Psoas muscle (tissue), 8 donors: ENCODE measurements at regions of chr12 and their contacts with region 1.

Region 1: GRCh38 chr12:9843416-9843815 is 16.1 kb downstream of the KLRF1 start:
- DNase-seq: no peak
- ATAC-seq: no peak
- H3K4me3 ChIP-seq: no peak overlapping the region
- H3K27ac ChIP-seq: no peak overlapping the region
- H3K4me1 ChIP-seq: no peaks in the 10 kb centered on the region
- H3K27me3 ChIP-seq: no peaks in the 10 kb centered on the region
- CTCF ChIP-seq: no peak

Region 2: DNA sequence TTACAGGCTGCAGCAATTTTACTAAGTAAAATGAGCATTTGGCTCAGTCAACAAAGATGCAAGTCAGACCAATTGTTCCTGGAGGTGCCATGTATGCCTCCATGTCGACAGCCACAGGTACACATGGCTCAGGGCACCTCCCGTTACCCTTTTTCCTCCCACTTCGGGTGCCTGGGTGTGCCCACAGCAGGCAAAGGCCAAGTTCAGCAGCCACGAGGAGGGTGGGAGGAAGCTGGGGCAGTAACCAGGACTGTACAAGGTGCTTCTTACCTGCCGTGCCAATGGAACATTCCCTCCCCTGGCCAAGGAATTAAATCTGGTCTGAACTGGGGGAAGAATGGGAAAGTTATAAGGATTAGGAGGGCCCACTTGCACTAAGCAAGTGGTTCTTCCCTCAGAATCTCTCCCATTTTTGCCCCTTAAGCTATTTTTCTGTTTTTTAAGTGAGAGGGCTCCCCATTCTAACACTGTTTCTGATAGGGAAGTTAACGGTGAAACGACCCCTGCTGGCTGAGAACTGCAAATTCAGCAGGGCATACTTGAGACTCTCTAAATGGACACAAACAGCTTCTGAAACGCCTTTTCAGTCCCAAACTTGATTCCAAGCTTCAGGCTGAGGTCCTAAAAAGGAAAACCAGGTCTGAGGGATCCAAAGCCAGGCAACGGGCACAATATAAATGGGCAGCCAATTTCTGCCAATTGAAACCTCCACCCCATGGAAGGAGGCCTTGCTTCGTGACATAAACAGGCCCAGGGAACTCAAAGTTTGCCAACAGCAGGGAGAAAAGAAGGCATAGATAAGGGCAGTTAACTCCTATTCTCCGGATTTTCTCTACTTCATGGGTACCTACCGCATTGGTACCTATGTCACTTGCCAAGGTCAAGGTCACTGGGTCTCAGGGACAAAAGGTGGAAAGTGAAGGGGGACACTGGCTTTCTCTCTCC is 135.3 kb before region 1 on chr12:
- intact Hi-C with region 1: no loop called
- DNase-seq: peak; percentile 28 to 48
- ATAC-seq: peak in 1 of 4 donors; percentile 60
- H3K4me3 ChIP-seq: no peak overlapping the region
- H3K27ac ChIP-seq: no peak overlapping the region
- H3K4me1 ChIP-seq: no peaks in the 10 kb centered on the region
- H3K27me3 ChIP-seq: no peaks in the 10 kb centered on the region
- CTCF ChIP-seq: peak; percentile 68

Region 3: GRCh38 chr12:11007608-11008007 is 1164.2 kb after region 1 on chr12:
- intact Hi-C with region 1: loop called in 1 of 2 experiments (anchors 5 kb)
- DNase-seq: no peak
- ATAC-seq: no peak
- H3K4me3 ChIP-seq: no peak overlapping the region
- H3K27ac ChIP-seq: no peak overlapping the region
- H3K4me1 ChIP-seq: no peaks in the 10 kb centered on the region
- H3K27me3 ChIP-seq: no peaks in the 10 kb centered on the region
- CTCF ChIP-seq: no peak